ENCODE measurements at regions of chr2 and their contacts with region 1.

Region 1: DNA sequence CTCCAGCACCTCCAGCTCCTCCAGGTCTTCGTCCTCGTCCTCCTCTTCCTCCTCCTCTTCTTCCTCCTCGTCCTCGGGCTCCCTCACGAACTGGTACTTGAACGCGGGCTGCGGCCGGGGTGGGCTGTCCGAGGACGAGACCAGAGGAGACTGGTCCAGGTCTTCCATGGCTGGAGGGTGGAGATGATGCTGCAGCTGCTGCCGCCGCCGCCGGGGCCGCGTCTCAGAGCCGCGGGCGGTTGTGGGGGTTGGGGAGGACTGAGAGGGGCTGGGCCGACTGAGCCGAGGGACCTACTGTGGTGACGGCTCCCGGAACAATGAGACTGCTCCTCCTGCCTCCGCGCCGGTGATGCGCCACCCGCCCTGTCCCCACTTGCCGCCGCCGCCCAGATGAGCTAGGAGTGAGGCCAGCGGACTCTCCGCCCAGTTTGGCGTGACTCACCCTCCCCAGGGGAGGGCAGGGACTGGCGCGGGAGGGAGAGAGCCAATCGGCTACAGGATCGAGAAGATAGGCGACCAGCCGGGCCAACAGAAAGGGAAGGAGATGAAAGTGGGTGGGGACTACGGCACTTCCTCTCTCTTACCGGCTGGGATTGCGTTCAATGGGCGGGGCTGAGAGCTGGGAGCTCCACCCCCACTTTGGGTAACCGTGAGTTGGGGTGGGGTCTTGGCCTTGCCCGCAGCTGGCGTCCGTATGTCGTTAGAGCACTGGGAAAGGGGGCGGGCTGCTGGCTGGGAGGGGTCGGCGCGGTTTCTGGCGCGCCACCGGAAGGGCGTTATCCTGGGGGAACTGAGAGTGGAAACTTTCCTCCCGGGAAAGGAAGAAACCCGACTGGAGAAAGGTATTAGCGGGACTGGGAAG is at the start of gene RTN4:
- DNase-seq: peak; percentile 100
- total RNA-seq, gene RTN4: 174 TPM

Region 2: DNA sequence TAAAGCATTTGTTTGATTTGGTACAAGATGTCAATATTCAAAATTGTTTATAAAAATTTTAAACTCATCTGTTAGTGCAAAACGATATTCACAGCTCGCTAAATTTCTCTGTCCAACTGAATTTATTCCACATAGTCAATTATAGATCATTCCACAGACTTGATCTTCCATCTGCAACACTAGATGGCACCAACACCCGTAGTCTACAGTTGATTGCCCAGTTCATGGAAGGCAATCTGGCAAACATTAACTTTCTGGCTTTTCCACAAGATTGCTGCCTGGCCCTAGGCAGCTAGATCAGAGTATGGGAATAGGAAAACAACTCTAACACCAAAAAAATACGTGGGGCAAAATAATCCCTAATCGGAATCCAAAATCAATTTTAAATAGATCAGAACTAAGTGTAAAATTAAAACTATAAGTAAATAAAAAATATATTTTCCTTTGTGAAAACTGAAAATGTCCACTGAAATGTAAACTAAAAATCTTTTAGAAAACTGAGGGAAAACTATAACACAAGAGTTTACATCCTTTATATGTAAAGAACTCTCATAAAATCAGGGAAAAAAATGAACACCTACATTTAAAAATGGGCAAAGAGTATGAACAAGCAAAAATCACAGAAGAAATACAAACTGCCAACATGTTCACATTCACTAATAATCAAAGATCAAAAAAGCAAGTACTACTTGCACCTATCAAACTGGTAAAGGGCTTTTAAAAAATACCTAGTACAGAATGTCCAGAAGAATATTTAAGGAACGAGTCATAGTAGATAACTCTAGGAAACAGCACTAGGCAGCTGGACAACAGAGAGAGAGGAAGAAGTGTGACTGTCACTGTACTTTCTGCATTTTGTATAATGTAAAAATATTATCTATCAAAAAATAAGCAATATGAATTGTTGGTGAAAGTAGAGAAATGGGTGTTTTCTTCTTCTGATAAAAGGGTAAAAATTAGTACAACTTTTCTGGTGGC is 35.1 kb before region 1 on chr2:
- intact Hi-C with region 1: loop called (anchors 2 kb)
- DNase-seq: no peak

Region 3: DNA sequence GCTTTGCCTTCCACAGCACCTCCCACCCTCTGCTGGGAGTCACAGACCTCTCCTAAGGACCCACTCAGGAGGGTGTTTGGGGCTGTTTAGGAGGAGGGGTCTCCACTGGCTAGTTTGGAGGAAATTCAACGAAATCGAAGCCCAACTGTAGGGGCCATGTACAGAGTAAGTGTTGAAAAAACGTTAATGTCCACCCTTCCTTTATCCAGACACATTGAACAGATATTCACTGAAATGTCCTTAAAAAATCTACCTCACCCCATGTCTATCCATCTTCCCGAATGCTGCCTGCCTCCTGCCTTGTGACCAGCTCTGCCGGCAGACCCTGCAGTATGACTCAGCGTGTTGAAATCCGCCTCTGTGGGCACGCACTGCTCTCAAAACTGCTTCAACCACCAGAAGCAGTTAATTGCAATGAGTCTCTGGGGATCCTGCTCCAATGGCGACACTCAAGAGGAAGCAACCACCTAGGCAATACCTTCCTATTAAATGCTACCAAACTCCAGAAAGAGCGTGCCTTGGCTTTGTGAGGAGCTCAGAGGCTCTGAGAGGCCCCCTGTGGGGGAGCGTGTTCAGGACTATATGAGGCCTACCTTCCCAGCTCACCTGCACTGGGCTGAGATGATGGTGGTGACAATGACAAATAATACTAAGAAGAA is 61.3 kb after region 1 on chr2:
- intact Hi-C with region 1: loop called (anchors 2 kb)
- DNase-seq: peak; percentile 86

Region 4: DNA sequence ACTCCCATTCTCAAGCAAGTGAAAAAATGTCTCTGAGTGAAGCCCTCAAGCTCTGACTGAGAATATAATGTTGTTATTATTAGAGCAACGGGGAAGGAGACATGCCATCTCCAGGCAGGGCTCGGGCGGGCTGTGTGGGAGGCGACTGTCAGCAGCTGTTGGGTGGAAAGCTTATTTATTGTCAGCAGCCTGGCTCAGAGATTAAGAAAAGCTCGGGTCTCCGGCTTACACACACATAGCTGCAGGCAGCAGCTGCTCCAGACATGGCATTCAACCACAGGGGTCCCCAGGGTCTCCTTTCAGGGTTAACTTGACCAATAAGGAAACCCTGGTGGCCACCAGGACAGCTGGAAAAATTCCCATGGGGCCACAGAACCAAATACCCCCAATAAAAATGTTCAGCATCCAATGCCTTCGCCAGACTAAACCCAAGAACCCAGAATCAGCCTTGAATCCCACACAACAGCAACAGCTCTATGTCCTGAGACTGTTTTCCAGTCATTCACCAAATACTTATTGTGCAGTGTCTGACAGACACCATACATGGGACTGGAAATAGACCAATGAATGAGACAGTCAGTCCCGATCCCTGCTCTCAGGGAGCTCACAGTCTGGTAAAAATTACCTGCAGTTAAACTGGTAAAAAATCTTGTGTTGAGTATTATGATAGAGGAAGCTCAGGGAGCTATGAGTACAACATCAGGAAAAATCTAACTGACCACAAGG is 70.4 kb after region 1 on chr2:
- intact Hi-C with region 1: loop called (anchors 2 kb)
- DNase-seq: no peak

Region 5: DNA sequence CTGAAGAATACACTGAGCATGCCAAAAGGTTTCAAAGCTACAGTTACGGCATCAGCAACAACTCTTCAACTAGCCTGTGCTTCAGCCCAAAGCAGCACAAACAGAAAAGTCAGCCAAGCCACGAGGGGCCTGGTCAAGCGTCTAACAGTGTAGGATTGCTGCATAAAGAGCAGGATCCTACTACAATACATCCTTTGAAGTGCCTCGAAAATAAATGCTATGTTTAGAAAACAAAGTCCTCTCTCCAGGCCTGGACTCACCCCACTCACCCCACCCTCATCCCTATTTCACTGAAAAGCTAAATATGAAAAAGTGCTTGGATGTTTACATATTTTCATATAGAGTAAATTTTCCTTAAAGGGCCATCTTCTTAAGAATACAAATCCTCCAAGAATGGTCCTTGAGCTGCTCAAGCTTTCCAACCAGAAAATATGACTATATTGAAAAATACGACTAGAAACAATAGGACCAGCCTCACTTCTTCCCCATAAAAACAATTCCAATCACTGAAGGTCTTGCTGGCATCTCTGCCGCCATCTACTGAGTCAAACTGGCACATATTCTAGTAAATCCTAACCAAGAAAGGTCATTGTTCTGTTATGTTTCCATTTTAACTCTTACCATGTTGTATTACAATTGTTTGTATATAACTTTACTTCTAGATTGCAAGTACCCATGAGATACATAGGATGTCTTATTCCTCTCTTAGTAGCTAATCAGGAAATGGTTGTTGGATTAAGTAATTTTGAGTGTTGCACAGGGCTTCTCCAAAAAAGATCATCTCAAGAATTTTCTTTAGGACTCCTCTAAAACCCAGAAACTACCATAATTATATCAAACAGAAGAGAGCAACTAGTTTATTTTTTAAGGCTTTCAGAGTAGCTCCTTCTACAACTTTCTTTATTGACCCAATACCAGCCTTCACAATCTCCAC is 118.1 kb after region 1 on chr2:
- intact Hi-C with region 1: loop called (anchors 2 kb)
- DNase-seq: no peak